ENCODE measurements at regions of chr20 and their contacts with region 1.

Region 1: DNA sequence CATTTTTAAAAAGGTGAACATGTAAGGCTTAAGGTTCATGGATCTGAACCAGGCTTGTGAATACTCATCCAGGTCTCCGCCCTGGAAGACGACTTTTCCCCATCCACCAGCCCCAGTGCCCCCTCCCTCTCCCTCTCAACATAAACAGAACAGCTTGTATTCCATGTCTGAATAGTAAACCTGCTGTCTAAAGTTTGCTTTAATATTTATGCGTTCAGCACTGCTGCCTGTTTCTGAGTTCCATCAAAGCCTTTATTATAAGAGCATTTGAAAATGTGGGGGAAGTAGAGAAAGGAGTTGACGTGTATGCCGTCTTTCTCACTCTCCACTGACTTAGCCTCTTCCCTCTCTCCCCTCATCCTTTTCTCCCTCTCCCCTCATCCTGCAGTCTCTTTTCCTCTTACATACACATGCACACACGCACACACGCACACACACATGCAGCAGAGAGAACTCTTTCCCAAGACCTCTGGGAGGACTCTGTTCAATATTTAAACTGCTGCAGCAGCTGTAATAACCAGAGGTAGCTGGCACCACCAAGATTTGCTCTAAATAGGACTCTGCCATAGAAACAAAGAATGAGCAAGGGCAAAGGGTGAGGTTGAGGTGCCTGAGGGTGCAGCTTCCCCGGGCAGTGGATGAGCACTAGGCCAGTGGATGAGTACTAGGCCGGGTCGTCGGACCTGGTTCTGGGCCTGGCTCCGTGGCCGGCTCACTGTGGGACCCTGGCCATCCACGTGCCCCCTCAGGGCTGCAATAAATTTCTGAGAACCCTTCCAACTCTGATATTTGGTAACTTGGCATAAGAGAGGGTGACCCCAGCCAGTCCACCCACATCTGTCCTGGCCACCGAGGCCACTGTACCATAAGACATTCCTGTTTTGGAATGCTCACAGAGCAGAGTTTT is 35.4 kb upstream of the VSTM2L start:
- DNase-seq: no peak
- H3K4me3 ChIP-seq: no peak overlapping the region
- H3K27ac ChIP-seq: no peak overlapping the region
- H3K4me1 ChIP-seq: no peaks in the 10 kb centered on the region
- H3K27me3 ChIP-seq: no peaks in the 10 kb centered on the region
- CTCF ChIP-seq: no peak
- POLR2A ChIP-seq: no peak

Region 2: DNA sequence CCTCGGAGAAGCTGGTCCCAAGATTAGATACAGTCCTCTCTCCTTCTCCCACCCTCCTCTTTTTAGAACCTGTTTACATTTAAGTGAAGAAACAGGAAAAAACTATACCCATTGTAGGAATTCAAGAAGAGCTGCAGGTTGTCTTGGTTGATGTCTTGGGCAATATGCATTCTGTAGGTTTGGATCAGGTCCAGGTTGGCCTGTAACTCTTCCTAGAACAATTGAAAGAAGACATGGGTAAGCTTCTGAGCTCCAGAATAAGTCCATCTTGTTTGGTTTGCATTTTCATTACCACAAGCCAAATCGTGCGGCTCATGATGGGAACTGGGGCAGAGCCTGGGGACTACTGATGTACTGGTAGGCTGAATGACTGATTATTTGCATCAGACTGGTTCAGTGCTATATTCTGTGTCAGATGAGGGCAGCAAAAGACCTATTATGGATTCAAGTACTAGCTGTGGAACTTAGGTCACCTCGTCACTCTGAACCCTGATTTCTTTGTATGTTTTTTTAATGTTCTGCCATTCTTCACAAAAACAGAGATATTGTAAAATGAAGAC is 1201.3 kb before region 1 on chr20:
- intact Hi-C with region 1: loop called (anchors 5 kb)
- DNase-seq: no peak
- H3K4me3 ChIP-seq: no peak overlapping the region
- H3K27ac ChIP-seq: no peak overlapping the region
- H3K4me1 ChIP-seq: no peaks in the 10 kb centered on the region
- H3K27me3 ChIP-seq: no peaks in the 10 kb centered on the region
- CTCF ChIP-seq: no peak
- POLR2A ChIP-seq: no peak

Region 3: DNA sequence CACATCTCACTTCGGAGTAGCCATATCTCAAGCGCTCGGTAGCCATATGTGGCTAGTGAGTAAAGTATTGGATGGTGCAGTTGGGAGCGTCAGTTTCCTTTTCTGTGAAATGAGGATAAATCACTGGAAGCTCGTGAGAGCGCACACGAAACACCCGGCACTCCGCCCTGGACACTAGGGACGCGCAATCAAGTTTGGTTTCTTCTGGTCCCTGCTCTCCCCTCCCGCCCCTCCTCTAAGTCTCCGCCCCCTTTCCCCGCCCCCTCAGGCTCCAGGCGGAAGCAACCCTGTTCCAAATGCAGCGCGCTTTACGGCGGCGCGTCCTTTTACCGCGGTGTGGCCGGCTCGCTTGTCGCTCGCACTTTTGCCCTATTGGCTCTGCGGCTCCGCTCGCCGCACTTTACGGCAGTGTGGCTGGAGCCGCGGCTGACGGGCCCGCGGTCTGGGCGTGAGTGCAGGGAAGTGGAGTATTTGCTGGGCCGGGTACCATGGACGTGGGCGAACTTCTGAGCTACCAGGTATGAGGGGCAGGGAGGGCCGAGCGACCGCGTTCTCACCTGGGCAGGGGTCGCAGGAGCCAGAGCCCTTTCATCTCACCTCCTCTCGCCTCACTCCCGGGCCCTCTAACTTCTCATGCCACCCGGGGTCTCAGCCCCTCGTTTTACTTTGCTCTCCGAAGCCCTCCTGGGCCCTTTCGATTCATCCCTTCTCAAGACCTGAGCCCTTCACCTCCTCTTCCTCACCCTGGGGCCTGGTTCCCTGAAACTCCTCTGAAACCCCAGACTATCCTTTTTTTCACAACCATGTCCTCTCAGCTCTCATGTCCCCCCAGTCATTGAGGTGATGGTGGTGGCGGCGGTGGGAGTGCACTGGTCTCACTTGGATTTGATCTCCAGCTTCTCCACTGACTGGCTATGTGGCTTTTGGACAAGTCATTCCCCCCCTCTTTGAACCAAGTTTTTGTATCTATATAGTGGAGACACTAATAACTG is 173.6 kb before region 1 on chr20 and contains the start of gene CTNNBL1:
- intact Hi-C with region 1: no loop called
- DNase-seq: peak; percentile 94 to 97
- H3K4me3 ChIP-seq: peak within 1 kb of the TSS; percentile 71 to 74 (median 73)
- H3K27ac ChIP-seq: peak within 1 kb of the TSS; percentile 62 to 71
- H3K4me1 ChIP-seq: peaks cover 0 to 4% of the 10 kb centered on the region in 2 donors
- H3K27me3 ChIP-seq: peaks cover 0 to under 1% of the 10 kb centered on the region in 2 donors
- CTCF ChIP-seq: no peak
- POLR2A ChIP-seq: no peak
- total RNA-seq, gene CTNNBL1: 32.2 to 37.0 (median 32.4) TPM

Region 4: DNA sequence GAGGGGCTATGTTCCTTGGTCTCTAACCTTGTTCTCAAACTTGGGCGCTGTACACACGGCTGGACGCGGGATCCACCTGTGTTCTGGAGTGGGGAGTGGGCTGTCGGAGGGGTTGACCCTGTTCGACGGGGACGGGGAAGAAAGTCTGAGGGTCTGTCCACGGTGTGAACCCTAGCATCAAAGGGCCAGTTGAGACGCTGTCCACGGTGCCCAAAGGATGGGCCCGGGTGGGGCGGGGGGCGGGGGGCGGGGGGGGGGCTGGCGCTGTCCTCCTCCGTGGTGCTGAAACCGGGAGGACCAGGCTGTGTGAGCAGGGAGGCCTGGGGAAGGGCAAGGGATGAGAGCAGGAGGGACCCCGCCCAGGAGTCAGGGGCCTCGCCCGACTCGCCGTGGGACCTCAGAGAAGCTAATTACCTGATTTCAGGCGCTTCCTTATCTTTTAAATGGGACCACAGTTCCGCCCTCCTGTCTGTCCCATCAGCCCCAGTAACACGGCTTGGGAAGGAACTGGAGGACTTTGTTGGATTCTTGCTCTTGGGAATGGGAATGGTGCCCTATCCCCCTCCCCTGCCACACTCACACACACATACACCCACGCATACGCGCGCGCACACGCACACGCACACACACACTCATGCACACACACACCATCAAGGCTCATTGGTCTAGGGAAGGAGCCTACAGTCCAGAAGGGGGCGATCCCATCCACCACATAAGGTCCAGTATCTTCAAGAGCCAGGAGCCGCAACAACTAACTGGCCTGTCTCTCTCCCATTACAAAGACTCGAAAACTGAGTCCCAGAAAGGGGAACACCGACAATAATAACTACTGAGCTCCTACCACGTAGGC is 34.3 kb after region 1 on chr20:
- intact Hi-C with region 1: no loop called
- DNase-seq: peak in 1 of 2 donors; percentile 19
- H3K4me3 ChIP-seq: peak overlapping the region in 1 of 3 donors; percentile 44
- H3K27ac ChIP-seq: no peak overlapping the region
- H3K4me1 ChIP-seq: no peaks in the 10 kb centered on the region
- H3K27me3 ChIP-seq: peaks cover 5 to 52% of the 10 kb centered on the region in 2 donors
- CTCF ChIP-seq: no peak
- POLR2A ChIP-seq: no peak

Measured in breast epithelium (tissue), 4 donors.